CD4-positive, alpha-beta memory T cell (primary cell): ENCODE measurements at regions of chr11 and their contacts with region 1.

Region 1: DNA sequence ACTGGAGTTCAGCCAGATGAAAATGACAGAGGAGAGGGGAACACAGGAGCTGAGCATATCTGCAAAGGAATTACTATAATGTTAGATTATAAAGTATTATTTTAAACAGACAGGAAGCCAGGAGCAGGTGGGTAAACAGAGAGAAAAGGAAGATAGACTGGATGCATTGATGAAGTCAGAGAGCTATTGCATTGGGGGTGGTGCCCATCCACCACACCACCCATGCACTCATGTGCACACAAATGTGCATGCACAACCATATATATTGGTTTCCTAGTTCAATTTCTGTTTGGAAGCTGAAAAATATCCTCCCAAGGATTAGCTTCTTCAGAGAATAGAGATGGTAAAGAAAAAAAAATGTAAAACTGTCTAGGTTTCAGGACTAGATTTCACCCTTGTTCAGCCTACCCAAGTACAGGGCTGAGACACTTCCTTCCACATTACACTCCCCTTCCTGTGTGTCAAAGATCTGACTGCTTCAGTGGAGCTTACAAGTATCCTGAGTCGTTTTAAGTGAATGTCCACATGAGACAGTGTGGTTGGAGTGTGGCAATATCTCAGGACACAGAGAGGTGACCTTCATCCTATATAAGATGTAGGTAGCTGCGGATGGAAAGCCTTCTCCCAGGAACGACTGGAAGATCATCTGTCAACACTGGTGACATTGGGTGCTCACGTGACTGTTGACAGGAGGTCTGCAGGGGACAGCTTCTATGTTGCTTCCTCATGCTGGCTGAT is 12.2 kb upstream of the SMPD1 start:
- DNase-seq: no peak
- H3K4me3 ChIP-seq: no peak overlapping the region
- H3K4me3 Mint-ChIP-seq: peak overlapping the region in 5 of 8 donors; percentile 22 to 68 (median 60)
- H3K27ac ChIP-seq: no peak overlapping the region
- H3K27ac Mint-ChIP-seq: peak overlapping the region; percentile 28 to 90 (median 79)
- H3K4me1 ChIP-seq: peaks cover 17% of the 10 kb centered on the region
- H3K4me1 Mint-ChIP-seq: peaks cover 14 to 29% (median 23%) of the 10 kb centered on the region in 4 donors
- H3K27me3 ChIP-seq: no peaks in the 10 kb centered on the region
- H3K27me3 Mint-ChIP-seq: no peaks in the 10 kb centered on the region

Region 2: GRCh38 chr11:6142936-6143335 is 235.1 kb before region 1 on chr11:
- CTCF ChIA-PET with region 1: no interaction called
- POLR2A ChIA-PET with region 1: no interaction called
- intact Hi-C with region 1: no loop called
- DNase-seq: no peak
- H3K4me3 ChIP-seq: no peak overlapping the region
- H3K4me3 Mint-ChIP-seq: no peak overlapping the region
- H3K27ac ChIP-seq: no peak overlapping the region
- H3K27ac Mint-ChIP-seq: no peak overlapping the region
- H3K4me1 ChIP-seq: no peaks in the 10 kb centered on the region
- H3K4me1 Mint-ChIP-seq: no peaks in the 10 kb centered on the region
- H3K27me3 ChIP-seq: peaks cover 3% of the 10 kb centered on the region
- H3K27me3 Mint-ChIP-seq: peaks cover 10 to 11% of the 10 kb centered on the region in 2 donors

Region 3: GRCh38 chr11:6353367-6353987 is 24.6 kb before region 1 on chr11:
- CTCF ChIA-PET with region 1: interaction called, 21 read pairs
- POLR2A ChIA-PET with region 1: no interaction called
- intact Hi-C with region 1: no loop called
- DNase-seq: peak; percentile 46 to 63 (median 52)
- H3K4me3 ChIP-seq: no peak overlapping the region
- H3K4me3 Mint-ChIP-seq: no peak overlapping the region
- H3K27ac ChIP-seq: no peak overlapping the region
- H3K27ac Mint-ChIP-seq: peak overlapping the region in 2 of 7 donors; percentile 2 to 74
- H3K4me1 ChIP-seq: no peaks in the 10 kb centered on the region
- H3K4me1 Mint-ChIP-seq: peaks cover 0 to 4% (median 1%) of the 10 kb centered on the region in 4 donors
- H3K27me3 ChIP-seq: no peaks in the 10 kb centered on the region
- H3K27me3 Mint-ChIP-seq: peaks cover 0 to 3% of the 10 kb centered on the region in 2 donors

Region 4: GRCh38 chr11:6402561-6402981 is 24.5 kb after region 1 on chr11:
- CTCF ChIA-PET with region 1: interaction called, 72 read pairs
- POLR2A ChIA-PET with region 1: interaction called, 23 read pairs
- intact Hi-C with region 1: no loop called
- DNase-seq: peak; percentile 89 to 95 (median 90)
- H3K4me3 ChIP-seq: peak overlapping the region; percentile 40 to 53
- H3K4me3 Mint-ChIP-seq: peak overlapping the region; percentile 80 to 98 (median 84)
- H3K27ac ChIP-seq: peak overlapping the region; percentile 69
- H3K27ac Mint-ChIP-seq: peak overlapping the region; percentile 96 to 99 (median 97)
- H3K4me1 ChIP-seq: peaks cover 72% of the 10 kb centered on the region
- H3K4me1 Mint-ChIP-seq: peaks cover 62 to 98% (median 80%) of the 10 kb centered on the region in 4 donors
- H3K27me3 ChIP-seq: no peaks in the 10 kb centered on the region
- H3K27me3 Mint-ChIP-seq: no peaks in the 10 kb centered on the region

Region 5: GRCh38 chr11:6443269-6444003 is 65.4 kb after region 1 on chr11:
- CTCF ChIA-PET with region 1: interaction called, 1,014 read pairs
- POLR2A ChIA-PET with region 1: interaction called, 50 read pairs
- intact Hi-C with region 1: loop called (anchors 1 kb)
- DNase-seq: peak; percentile 53 to 58 (median 57)
- H3K4me3 ChIP-seq: no peak overlapping the region
- H3K4me3 Mint-ChIP-seq: no peak overlapping the region
- H3K27ac ChIP-seq: no peak overlapping the region
- H3K27ac Mint-ChIP-seq: no peak overlapping the region
- H3K4me1 ChIP-seq: peaks cover 18% of the 10 kb centered on the region
- H3K4me1 Mint-ChIP-seq: no peaks in the 10 kb centered on the region
- H3K27me3 ChIP-seq: no peaks in the 10 kb centered on the region
- H3K27me3 Mint-ChIP-seq: no peaks in the 10 kb centered on the region

Region 6: GRCh38 chr11:6481012-6481923 is 103.2 kb after region 1 on chr11 and contains the starts of genes ARFIP2 and TIMM10B:
- CTCF ChIA-PET with region 1: interaction called, 23 read pairs
- POLR2A ChIA-PET with region 1: interaction called, 8 read pairs
- intact Hi-C with region 1: no loop called
- DNase-seq: peak; percentile 93 to 98 (median 95)
- H3K4me3 ChIP-seq: peak within 1 kb of the TSS; percentile 83 to 97
- H3K4me3 Mint-ChIP-seq: peak within 1 kb of the TSS; percentile 93 to 98 (median 96)
- H3K27ac ChIP-seq: peak within 1 kb of the TSS; percentile 90
- H3K27ac Mint-ChIP-seq: peak within 1 kb of the TSS; percentile 95 to 99 (median 98)
- H3K4me1 ChIP-seq: peaks cover 46% of the 10 kb centered on the region
- H3K4me1 Mint-ChIP-seq: peaks cover 26 to 44% (median 36%) of the 10 kb centered on the region in 4 donors
- H3K27me3 ChIP-seq: no peaks in the 10 kb centered on the region
- H3K27me3 Mint-ChIP-seq: no peaks in the 10 kb centered on the region
- total RNA-seq, gene ARFIP2: 53.9 to 56.9 TPM
- total RNA-seq, gene TIMM10B: 54.7 to 60.3 TPM

Region 7: DNA sequence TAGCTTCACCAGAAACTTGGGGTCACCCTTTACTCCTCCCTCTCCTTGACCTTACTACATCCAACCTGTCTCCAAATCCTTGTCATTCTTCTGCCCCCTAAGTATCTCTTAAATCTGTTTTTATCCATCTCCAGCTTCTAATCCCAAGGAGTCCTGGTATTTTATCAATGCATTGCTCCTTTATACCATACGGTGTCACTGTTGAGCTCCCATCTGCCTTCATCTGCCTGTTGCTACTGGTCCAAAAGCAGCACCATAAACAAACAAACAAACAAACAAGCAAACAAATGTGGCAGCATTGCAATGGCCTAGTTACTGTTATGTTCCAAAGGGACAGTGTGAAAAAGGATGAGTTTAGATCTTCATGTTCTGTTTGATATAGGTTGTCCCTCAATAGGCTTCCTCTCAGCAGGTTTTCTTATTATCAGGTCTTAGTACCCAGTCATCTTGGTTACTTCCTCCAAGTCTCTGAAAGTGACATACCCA is 153.2 kb after region 1 on chr11:
- CTCF ChIA-PET with region 1: interaction called, 15 read pairs
- POLR2A ChIA-PET with region 1: no interaction called
- intact Hi-C with region 1: no loop called
- DNase-seq: peak; percentile 46 to 54 (median 50)
- H3K4me3 ChIP-seq: no peak overlapping the region
- H3K4me3 Mint-ChIP-seq: no peak overlapping the region
- H3K27ac ChIP-seq: no peak overlapping the region
- H3K27ac Mint-ChIP-seq: no peak overlapping the region
- H3K4me1 ChIP-seq: peaks cover 7% of the 10 kb centered on the region
- H3K4me1 Mint-ChIP-seq: peaks cover 6 to 14% (median 8%) of the 10 kb centered on the region in 4 donors
- H3K27me3 ChIP-seq: no peaks in the 10 kb centered on the region
- H3K27me3 Mint-ChIP-seq: no peaks in the 10 kb centered on the region

Region 8: DNA sequence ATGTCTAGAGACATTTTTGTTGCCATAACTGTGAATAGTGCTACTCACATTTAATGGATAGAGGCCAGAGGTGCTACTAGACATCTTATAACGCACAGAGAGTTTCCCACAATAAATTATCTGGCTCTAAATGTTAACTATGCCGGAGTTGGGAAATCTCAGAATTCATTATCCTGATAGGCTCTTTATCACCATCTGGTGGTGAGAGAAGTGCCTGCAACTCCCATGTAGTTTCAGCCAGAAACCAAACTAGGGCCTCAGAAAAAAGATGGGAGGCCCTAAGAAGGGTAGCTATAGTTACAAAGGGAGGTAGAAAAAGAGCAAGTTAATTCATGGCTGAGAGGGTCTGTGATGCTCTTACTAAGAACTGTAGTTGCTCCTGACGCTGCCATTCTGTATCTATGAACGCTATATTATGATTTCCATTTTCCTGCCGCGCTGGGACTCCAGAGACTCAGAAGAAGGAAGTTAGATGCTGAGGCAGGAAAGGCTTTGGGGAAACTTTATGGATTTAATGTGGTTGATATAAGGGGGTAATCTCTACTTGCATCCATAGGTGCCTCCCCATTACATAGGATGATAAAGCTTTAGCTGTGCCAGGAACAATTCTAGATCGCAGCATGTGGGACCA is 327.9 kb after region 1 on chr11:
- CTCF ChIA-PET with region 1: interaction called, 25 read pairs
- POLR2A ChIA-PET with region 1: interaction called, 5 read pairs
- intact Hi-C with region 1: loop called (anchors 1 kb)
- DNase-seq: peak; percentile 38 to 52 (median 46)
- H3K4me3 ChIP-seq: no peak overlapping the region
- H3K4me3 Mint-ChIP-seq: no peak overlapping the region
- H3K27ac ChIP-seq: no peak overlapping the region
- H3K27ac Mint-ChIP-seq: peak overlapping the region; percentile 4 to 84 (median 43)
- H3K4me1 ChIP-seq: no peaks in the 10 kb centered on the region
- H3K4me1 Mint-ChIP-seq: peaks cover 9 to 25% (median 18%) of the 10 kb centered on the region in 4 donors
- H3K27me3 ChIP-seq: no peaks in the 10 kb centered on the region
- H3K27me3 Mint-ChIP-seq: no peaks in the 10 kb centered on the region